ENCODE measurements at regions of chr6 and their contacts with region 1.

Region 1: GRCh38 chr6:89080542-89081422 is at the start of gene PNRC1:
- DNase-seq: peak; percentile 99 to 100 (median 100)
- ATAC-seq: peak; percentile 71 to 81 (median 78)
- H3K4me3 ChIP-seq: peak within 1 kb of the TSS; percentile 73 to 98
- H3K4me3 Mint-ChIP-seq: peak within 1 kb of the TSS; percentile 92 to 96 (median 94)
- H3K27ac ChIP-seq: peak within 1 kb of the TSS; percentile 98
- H3K27ac Mint-ChIP-seq: peak within 1 kb of the TSS; percentile 97 to 99
- H3K4me1 ChIP-seq: peaks cover 30 to 36% of the 10 kb centered on the region in 2 experiments
- H3K4me1 Mint-ChIP-seq: peaks cover 35 to 47% (median 42%) of the 10 kb centered on the region in 3 donors
- H3K27me3 ChIP-seq: no peaks in the 10 kb centered on the region
- H3K27me3 Mint-ChIP-seq: no peaks in the 10 kb centered on the region
- total RNA-seq, gene PNRC1: 421 to 792 (median 481) TPM

Region 2: GRCh38 chr6:87832025-87832825 is 1248.6 kb before region 1 on chr6:
- CTCF ChIA-PET with region 1: no interaction called
- POLR2A ChIA-PET with region 1: interaction called in 1 of 2 experiments, 10 read pairs
- DNase-seq: peak in 4 of 35 experiments; percentile 1 to 49 (median 12)
- ATAC-seq: peak; percentile 59 to 82 (median 74)
- H3K4me3 ChIP-seq: peak overlapping the region; percentile 45 to 48
- H3K4me3 Mint-ChIP-seq: peak overlapping the region; percentile 77 to 87 (median 81)
- H3K27ac ChIP-seq: peak overlapping the region; percentile 50
- H3K27ac Mint-ChIP-seq: peak overlapping the region; percentile 89 to 93
- H3K4me1 ChIP-seq: peaks cover 0 to 5% of the 10 kb centered on the region in 2 experiments
- H3K4me1 Mint-ChIP-seq: peaks cover 11 to 14% (median 11%) of the 10 kb centered on the region in 3 donors
- H3K27me3 ChIP-seq: no peaks in the 10 kb centered on the region
- H3K27me3 Mint-ChIP-seq: peaks cover 1 to 5% of the 10 kb centered on the region in 2 donors

Region 3: DNA sequence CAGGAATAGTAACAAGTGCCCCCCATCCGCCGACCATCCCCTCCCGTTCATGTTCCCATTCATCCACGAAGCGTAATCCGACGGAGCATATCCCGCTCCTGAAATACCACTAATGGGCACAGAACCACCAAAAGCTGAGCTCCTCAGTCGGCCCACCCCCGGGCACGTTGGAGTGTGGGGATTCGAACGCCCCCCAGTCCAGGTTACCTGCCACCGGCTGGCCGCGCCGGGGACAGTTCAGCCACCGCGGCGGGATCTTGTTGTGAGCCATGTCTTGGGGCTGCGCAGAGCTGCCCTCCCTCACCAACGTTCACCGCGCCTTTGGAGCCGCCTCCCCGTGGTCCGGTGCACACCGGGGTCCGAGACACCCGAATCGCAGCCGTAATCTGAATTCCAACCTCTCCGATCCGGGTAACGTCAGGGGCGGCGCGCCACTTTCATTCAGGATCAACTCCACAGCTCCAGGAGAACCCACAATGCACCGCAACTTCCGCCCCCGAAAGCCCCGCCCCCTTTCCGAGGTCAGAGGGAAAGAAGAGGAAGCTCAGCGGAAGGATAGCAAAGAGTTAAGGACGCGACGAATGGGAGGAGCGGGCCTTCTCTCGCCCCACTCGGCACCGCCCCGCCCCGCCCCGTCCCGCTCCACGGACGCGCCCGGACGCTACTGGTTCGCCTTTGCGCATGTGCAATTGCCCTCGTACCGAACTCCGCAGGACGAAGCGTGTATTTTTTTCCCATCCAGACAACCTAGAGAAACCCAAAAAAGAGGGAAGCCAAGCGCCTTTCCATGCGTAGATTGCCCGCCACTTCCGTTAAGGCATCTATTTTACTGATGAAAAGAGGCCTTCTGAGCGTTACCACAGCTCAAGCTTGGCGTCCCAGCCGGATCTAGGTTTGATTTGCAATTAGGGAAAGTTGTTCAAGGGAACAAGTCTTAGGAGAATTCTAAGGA is 117.4 kb before region 1 on chr6 and contains the start of gene RNGTT:
- CTCF ChIA-PET with region 1: interaction called, 4 to 13 read pairs
- POLR2A ChIA-PET with region 1: interaction called, 4 to 17 read pairs
- DNase-seq: peak; percentile 91 to 98 (median 95)
- ATAC-seq: peak; percentile 99 to 100 (median 100)
- H3K4me3 ChIP-seq: peak within 1 kb of the TSS; percentile 88 to 96
- H3K4me3 Mint-ChIP-seq: peak within 1 kb of the TSS; percentile 98 to 99 (median 98)
- H3K27ac ChIP-seq: peak within 1 kb of the TSS; percentile 56
- H3K27ac Mint-ChIP-seq: peak within 1 kb of the TSS; percentile 74 to 95
- H3K4me1 ChIP-seq: peaks cover 4 to 31% of the 10 kb centered on the region in 2 experiments
- H3K4me1 Mint-ChIP-seq: peaks cover 45 to 55% (median 48%) of the 10 kb centered on the region in 3 donors
- H3K27me3 ChIP-seq: no peaks in the 10 kb centered on the region
- H3K27me3 Mint-ChIP-seq: no peaks in the 10 kb centered on the region
- total RNA-seq, gene RNGTT: 16.6 to 22.2 (median 17.5) TPM

Region 4: DNA sequence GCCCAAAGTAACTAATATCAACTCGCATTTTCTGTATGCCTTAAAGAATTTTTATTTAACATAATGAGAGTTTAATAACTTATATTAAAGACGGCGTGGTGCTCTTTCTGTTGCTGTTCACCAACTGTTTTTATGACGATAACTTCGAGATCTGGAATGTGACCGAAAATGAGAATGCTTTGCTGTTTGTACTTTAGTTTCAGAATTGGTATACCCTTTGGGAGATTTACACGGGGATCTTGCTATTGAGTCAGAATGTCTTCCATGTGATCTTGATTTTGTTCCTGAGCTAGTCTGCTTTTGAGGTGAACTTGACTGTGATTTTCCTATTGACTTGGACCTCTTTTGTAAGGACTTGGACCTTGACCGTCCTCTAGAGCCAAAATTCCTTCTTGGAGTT is 17.7 kb after region 1 on chr6:
- CTCF ChIA-PET with region 1: no interaction called
- POLR2A ChIA-PET with region 1: interaction called in 1 of 2 experiments, 15 read pairs
- DNase-seq: no peak
- ATAC-seq: no peak
- H3K4me3 ChIP-seq: no peak overlapping the region
- H3K4me3 Mint-ChIP-seq: no peak overlapping the region
- H3K27ac ChIP-seq: no peak overlapping the region
- H3K27ac Mint-ChIP-seq: no peak overlapping the region
- H3K4me1 ChIP-seq: no peaks in the 10 kb centered on the region
- H3K4me1 Mint-ChIP-seq: peaks cover 0 to 4% (median 0%) of the 10 kb centered on the region in 3 donors
- H3K27me3 ChIP-seq: no peaks in the 10 kb centered on the region
- H3K27me3 Mint-ChIP-seq: no peaks in the 10 kb centered on the region

Region 5: DNA sequence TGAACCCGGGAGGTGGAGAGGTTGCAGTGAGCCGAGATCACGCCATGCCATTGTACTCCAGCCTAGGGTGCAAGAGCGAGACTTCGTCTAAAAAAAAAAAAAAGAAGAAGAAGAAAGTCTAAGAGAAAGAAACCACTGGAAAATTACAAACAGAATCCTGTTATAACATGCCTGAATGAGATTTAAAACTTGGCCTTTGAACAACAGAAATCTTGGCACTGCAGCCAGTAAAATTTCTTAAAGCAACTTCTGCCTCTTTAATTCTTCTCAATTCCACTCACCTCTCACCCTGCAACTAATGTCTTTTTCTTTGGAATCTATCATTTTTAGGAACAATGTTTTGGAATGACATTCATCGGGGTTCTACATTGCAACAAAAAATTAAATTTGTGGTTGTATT is 91.3 kb after region 1 on chr6:
- CTCF ChIA-PET with region 1: no interaction called
- POLR2A ChIA-PET with region 1: interaction called in 1 of 2 experiments, 11 read pairs
- DNase-seq: no peak
- ATAC-seq: no peak
- H3K4me3 ChIP-seq: no peak overlapping the region
- H3K4me3 Mint-ChIP-seq: no peak overlapping the region
- H3K27ac ChIP-seq: no peak overlapping the region
- H3K27ac Mint-ChIP-seq: no peak overlapping the region
- H3K4me1 ChIP-seq: no peaks in the 10 kb centered on the region
- H3K4me1 Mint-ChIP-seq: no peaks in the 10 kb centered on the region
- H3K27me3 ChIP-seq: no peaks in the 10 kb centered on the region
- H3K27me3 Mint-ChIP-seq: no peaks in the 10 kb centered on the region

Region 6: GRCh38 chr6:89352278-89353117 is 271.7 kb after region 1 on chr6 and contains the start of gene UBE2J1:
- CTCF ChIA-PET with region 1: interaction called in 1 of 2 experiments, 8 read pairs
- POLR2A ChIA-PET with region 1: interaction called, 9 to 25 read pairs
- DNase-seq: peak; percentile 34 to 80 (median 60)
- ATAC-seq: peak; percentile 79 to 87 (median 85)
- H3K4me3 ChIP-seq: peak within 1 kb of the TSS; percentile 66 to 92
- H3K4me3 Mint-ChIP-seq: peak within 1 kb of the TSS; percentile 94 to 99 (median 96)
- H3K27ac ChIP-seq: peak within 1 kb of the TSS; percentile 71
- H3K27ac Mint-ChIP-seq: peak within 1 kb of the TSS; percentile 97 to 98
- H3K4me1 ChIP-seq: peaks cover 24 to 36% of the 10 kb centered on the region in 2 experiments
- H3K4me1 Mint-ChIP-seq: peaks cover 69 to 76% (median 71%) of the 10 kb centered on the region in 3 donors
- H3K27me3 ChIP-seq: no peaks in the 10 kb centered on the region
- H3K27me3 Mint-ChIP-seq: no peaks in the 10 kb centered on the region
- total RNA-seq, gene UBE2J1: 14.6 to 24.1 (median 22.6) TPM

Region 7: GRCh38 chr6:89542081-89542857 is 461.5 kb after region 1 on chr6:
- CTCF ChIA-PET with region 1: no interaction called
- POLR2A ChIA-PET with region 1: no interaction called
- DNase-seq: no peak
- ATAC-seq: no peak
- H3K4me3 ChIP-seq: no peak overlapping the region
- H3K4me3 Mint-ChIP-seq: no peak overlapping the region
- H3K27ac ChIP-seq: no peak overlapping the region
- H3K27ac Mint-ChIP-seq: no peak overlapping the region
- H3K4me1 ChIP-seq: no peaks in the 10 kb centered on the region
- H3K4me1 Mint-ChIP-seq: no peaks in the 10 kb centered on the region
- H3K27me3 ChIP-seq: no peaks in the 10 kb centered on the region
- H3K27me3 Mint-ChIP-seq: peaks cover 5 to 10% of the 10 kb centered on the region in 2 donors

Region 8: GRCh38 chr6:89866024-89866678 is 785.4 kb after region 1 on chr6:
- CTCF ChIA-PET with region 1: no interaction called
- POLR2A ChIA-PET with region 1: no interaction called
- DNase-seq: no peak
- ATAC-seq: no peak
- H3K4me3 ChIP-seq: no peak overlapping the region
- H3K4me3 Mint-ChIP-seq: no peak overlapping the region
- H3K27ac ChIP-seq: no peak overlapping the region
- H3K27ac Mint-ChIP-seq: no peak overlapping the region
- H3K4me1 ChIP-seq: no peaks in the 10 kb centered on the region
- H3K4me1 Mint-ChIP-seq: peaks cover 2 to 10% (median 9%) of the 10 kb centered on the region in 3 donors
- H3K27me3 ChIP-seq: no peaks in the 10 kb centered on the region
- H3K27me3 Mint-ChIP-seq: no peaks in the 10 kb centered on the region

Region 9: GRCh38 chr6:90121982-90122381 is 1041.2 kb after region 1 on chr6:
- CTCF ChIA-PET with region 1: no interaction called
- POLR2A ChIA-PET with region 1: no interaction called
- DNase-seq: no peak
- ATAC-seq: no peak
- H3K4me3 ChIP-seq: no peak overlapping the region
- H3K4me3 Mint-ChIP-seq: no peak overlapping the region
- H3K27ac ChIP-seq: no peak overlapping the region
- H3K27ac Mint-ChIP-seq: peak overlapping the region; percentile 23 to 86
- H3K4me1 ChIP-seq: peaks cover 4 to 21% of the 10 kb centered on the region in 2 experiments
- H3K4me1 Mint-ChIP-seq: peaks cover 57 to 76% (median 58%) of the 10 kb centered on the region in 3 donors
- H3K27me3 ChIP-seq: no peaks in the 10 kb centered on the region
- H3K27me3 Mint-ChIP-seq: no peaks in the 10 kb centered on the region